GM12878 (cell line): ENCODE measurements at regions of chr4 and their contacts with region 1.

Region 1: DNA sequence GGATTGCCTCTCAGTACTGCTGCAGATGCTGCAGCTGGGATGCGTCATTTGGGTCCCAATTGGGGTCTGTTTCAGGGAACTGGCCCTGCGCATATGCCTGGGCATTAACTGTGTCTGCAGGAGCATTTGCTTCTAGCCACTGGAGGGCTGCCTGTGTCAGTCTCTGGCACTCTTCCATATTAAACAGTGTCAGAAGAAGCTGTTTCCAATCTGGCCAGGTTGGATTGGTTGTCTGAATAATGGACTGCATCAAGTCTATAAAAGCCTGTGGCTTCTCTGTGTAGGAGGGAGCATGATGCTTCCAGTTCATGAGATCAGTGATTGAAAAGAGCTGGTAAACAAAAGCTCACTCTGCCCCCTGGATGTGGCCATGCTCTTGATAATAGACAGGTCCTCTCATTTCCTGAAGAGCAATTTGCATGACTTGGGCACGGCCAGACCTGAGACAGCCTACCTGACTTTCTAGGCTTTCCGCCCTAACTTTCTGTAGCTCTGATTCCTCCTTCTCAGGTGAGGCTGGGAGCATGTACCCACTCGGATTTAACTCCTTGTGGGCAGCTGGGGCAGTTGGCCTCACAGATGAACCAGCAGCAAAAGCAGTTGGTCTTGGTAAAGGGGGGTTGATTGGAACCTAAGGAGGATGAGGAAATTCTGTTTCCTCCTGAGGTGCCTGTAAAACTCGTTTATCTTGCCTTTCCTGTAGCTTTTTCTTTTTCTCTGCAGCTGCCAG is 29.2 kb downstream of the SULT1E1 start:
- DNase-seq: no peak
- ATAC-seq: peak; percentile 25
- H3K4me3 ChIP-seq: no peak overlapping the region
- H3K27ac ChIP-seq: no peak overlapping the region
- H3K4me1 ChIP-seq: peaks cover 19% of the 10 kb centered on the region
- H3K27me3 ChIP-seq: no peaks in the 10 kb centered on the region
- CTCF ChIP-seq: no peak
- EP300 ChIP-seq: no peak
- POLR2A ChIP-seq: no peak
- RAD21 ChIP-seq: no peak

Region 2: GRCh38 chr4:69800599-69800998 is 30.1 kb before region 1 on chr4:
- CTCF ChIA-PET with region 1: no interaction called
- POLR2A ChIA-PET with region 1: no interaction called
- RAD21 ChIA-PET with region 1: no interaction called
- SMC1A ChIA-PET with region 1: no interaction called
- in situ Hi-C with region 1: no loop called
- intact Hi-C with region 1: no loop called
- DNase-seq: no peak
- ATAC-seq: no peak
- H3K4me3 ChIP-seq: no peak overlapping the region
- H3K27ac ChIP-seq: no peak overlapping the region
- H3K4me1 ChIP-seq: no peaks in the 10 kb centered on the region
- H3K27me3 ChIP-seq: no peaks in the 10 kb centered on the region
- CTCF ChIP-seq: no peak
- EP300 ChIP-seq: no peak
- POLR2A ChIP-seq: no peak
- RAD21 ChIP-seq: no peak

Region 3: DNA sequence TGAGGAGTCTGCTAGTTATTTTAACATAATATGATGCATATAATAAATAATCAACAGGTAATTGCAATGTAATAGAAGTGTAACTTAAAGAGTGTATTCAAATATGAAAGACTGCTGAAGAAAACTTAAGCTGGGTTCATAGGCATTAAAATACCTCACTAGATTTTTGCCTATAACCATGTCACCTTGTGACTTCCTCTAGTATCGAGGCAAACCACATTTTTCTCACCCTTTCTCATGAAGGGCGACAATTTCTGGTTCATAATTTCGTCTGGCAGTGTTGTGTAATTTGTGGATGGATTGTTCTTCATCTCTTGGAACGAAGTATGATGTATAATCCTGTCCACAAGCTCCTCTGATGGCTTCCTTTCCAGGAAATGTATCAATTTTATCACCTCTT is 13.2 kb after region 1 on chr4:
- CTCF ChIA-PET with region 1: interaction called, 5 read pairs
- POLR2A ChIA-PET with region 1: interaction called, 7 read pairs
- RAD21 ChIA-PET with region 1: interaction called, 3 read pairs
- SMC1A ChIA-PET with region 1: interaction called, 11 read pairs
- in situ Hi-C with region 1: no loop called
- intact Hi-C with region 1: no loop called
- DNase-seq: no peak
- ATAC-seq: peak; percentile 63; the same call in 2 of the 3 replicates
- H3K4me3 ChIP-seq: no peak overlapping the region
- H3K27ac ChIP-seq: no peak overlapping the region
- H3K4me1 ChIP-seq: no peaks in the 10 kb centered on the region
- H3K27me3 ChIP-seq: no peaks in the 10 kb centered on the region
- CTCF ChIP-seq: no peak
- EP300 ChIP-seq: no peak
- POLR2A ChIP-seq: no peak
- RAD21 ChIP-seq: no peak